Ovary (tissue), 10 donors: ENCODE measurements at regions of chr17 and their contacts with region 1.

Region 1: DNA sequence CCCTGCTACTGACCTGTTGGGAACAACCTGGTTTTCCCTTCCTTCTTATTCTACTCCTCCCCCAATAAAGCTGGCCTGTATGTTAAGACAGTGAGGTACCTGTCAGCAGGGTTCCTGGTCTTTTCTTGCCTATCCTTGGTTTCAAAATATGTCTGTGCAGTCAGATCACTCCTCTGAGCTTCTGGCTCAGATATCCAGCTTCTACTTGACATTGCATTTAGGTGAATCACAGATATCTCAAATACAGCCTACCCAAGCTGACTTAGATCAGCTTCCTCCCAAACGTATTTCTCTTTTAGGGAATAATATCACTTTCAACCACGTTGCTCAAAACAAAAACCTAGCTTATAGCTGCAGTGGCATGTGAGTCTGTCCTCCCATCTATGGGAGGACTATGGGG is 48.7 kb downstream of the TEX14 start:
- DNase-seq: no peak
- H3K4me3 ChIP-seq: no peak overlapping the region
- H3K27ac ChIP-seq: no peak overlapping the region
- H3K4me1 ChIP-seq: no peaks in the 10 kb centered on the region
- H3K27me3 ChIP-seq: no peaks in the 10 kb centered on the region
- CTCF ChIP-seq: no peak
- EP300 ChIP-seq: no peak
- POLR2A ChIP-seq: no peak

Region 2: GRCh38 chr17:57567251-57567650 is 1075.9 kb before region 1 on chr17:
- intact Hi-C with region 1: loop called in 1 of 4 experiments (anchors 5 kb)
- DNase-seq: no peak
- H3K4me3 ChIP-seq: no peak overlapping the region
- H3K27ac ChIP-seq: no peak overlapping the region
- H3K4me1 ChIP-seq: peaks cover 4% of the 10 kb centered on the region
- H3K27me3 ChIP-seq: no peaks in the 10 kb centered on the region
- CTCF ChIP-seq: no peak
- EP300 ChIP-seq: no peak
- POLR2A ChIP-seq: no peak

Region 3: GRCh38 chr17:58513965-58514774 is 129.0 kb before region 1 on chr17 and contains the start of gene MTMR4:
- intact Hi-C with region 1: no loop called
- DNase-seq: peak; percentile 85 to 89 (median 86)
- H3K4me3 ChIP-seq: peak within 1 kb of the TSS; percentile 47
- H3K27ac ChIP-seq: peak within 1 kb of the TSS; percentile 45 to 79
- H3K4me1 ChIP-seq: peaks cover 14% of the 10 kb centered on the region
- H3K27me3 ChIP-seq: no peaks in the 10 kb centered on the region
- CTCF ChIP-seq: no peak
- EP300 ChIP-seq: no peak
- POLR2A ChIP-seq: no peak
- total RNA-seq, gene MTMR4: 23.8 to 60.1 (median 27.7) TPM

Region 4: GRCh38 chr17:58786613-58787295 is 143.6 kb after region 1 on chr17:
- intact Hi-C with region 1: no loop called
- DNase-seq: no peak
- H3K4me3 ChIP-seq: no peak overlapping the region
- H3K27ac ChIP-seq: no peak overlapping the region
- H3K4me1 ChIP-seq: no peaks in the 10 kb centered on the region
- H3K27me3 ChIP-seq: no peaks in the 10 kb centered on the region
- CTCF ChIP-seq: no peak
- EP300 ChIP-seq: no peak
- POLR2A ChIP-seq: no peak